PC-3 (cell line): ENCODE measurements at regions of chr7 and their contacts with region 1.

Region 1: DNA sequence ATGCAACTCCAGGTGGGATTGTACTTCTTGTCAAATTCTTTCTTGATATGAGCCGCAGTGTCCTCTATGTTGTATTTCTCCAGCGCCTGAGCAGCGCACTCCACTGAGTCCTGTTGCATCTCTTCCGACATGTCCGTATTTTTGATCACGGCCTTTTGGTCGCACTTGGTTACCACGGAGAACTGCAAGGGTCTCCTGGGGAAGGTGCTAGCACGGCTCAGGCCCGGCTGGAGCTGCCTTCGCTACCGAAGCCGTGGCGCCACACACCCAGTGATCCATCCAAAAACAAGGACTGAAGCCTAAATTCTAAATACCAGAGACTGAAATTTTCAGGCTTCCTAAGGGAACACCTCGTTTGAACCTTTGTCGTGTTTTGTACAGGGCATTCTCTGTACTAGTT is 194.4 kb upstream of the SEMA3D start:
- DNase-seq: no peak
- ATAC-seq: no peak
- H3K4me3 ChIP-seq: no peak overlapping the region
- H3K27ac ChIP-seq: no peak overlapping the region
- H3K4me1 ChIP-seq: peaks cover 22% of the 10 kb centered on the region
- H3K27me3 ChIP-seq: no peaks in the 10 kb centered on the region
- CTCF ChIP-seq: no peak

Region 2: DNA sequence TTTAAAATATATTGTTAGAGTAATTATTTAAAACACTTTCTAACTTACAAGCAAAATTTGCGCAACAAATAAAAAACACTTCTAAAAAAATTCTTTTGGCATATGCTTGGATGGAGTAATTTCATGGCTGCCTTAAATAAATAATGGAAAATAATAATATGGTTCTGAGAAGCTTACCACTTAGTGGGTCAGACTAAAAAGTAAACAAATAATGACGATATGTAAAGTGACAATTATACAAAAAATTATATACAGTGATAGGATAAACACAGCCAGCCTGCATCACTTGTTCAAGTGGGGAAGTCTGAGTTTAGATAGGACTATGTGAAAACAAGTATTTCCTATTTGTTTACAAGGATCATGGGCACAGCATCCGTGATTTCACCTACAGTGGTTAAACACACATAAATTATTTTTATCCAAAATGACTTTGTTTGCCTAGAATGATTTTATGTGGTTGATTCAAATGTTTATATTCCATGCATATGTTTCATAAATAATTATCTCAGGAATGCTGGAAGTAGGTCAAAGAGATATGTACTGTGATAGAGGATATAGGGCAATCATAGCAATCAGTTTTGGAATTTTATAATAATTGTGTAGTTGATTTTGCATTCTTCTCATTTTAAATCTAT is 52.6 kb before region 1 on chr7:
- CTCF ChIA-PET with region 1: no interaction called
- POLR2A ChIA-PET with region 1: no interaction called
- intact Hi-C with region 1: loop called (anchors 5 kb)
- DNase-seq: peak; percentile 49
- ATAC-seq: peak; percentile 53
- H3K4me3 ChIP-seq: no peak overlapping the region
- H3K27ac ChIP-seq: no peak overlapping the region
- H3K4me1 ChIP-seq: peaks cover 20% of the 10 kb centered on the region
- H3K27me3 ChIP-seq: no peaks in the 10 kb centered on the region
- CTCF ChIP-seq: no peak

Region 3: GRCh38 chr7:85535974-85536729 is 154.9 kb after region 1 on chr7:
- CTCF ChIA-PET with region 1: no interaction called
- POLR2A ChIA-PET with region 1: no interaction called
- intact Hi-C with region 1: no loop called
- DNase-seq: no peak
- ATAC-seq: no peak
- H3K4me3 ChIP-seq: no peak overlapping the region
- H3K27ac ChIP-seq: no peak overlapping the region
- H3K4me1 ChIP-seq: no peaks in the 10 kb centered on the region
- H3K27me3 ChIP-seq: no peaks in the 10 kb centered on the region
- CTCF ChIP-seq: no peak

Region 4: DNA sequence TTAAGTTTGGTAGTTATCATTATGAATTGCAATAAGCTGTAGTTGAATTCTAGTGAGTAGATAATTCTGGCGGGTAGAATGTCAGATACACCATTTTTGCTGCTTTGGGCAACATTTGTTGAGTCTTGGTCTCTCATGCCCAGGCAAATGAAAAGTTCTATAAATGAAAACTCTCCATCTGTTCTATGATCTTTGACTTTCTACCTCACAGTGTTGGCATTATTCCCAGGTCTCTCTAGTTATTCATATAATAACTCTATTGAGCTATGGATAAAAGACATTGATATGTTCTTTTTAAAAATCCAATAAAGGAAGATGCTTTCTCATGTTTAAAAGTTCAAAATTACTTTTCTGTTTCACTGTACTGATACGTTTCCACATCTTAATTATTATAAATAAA is 221.0 kb after region 1 on chr7:
- CTCF ChIA-PET with region 1: no interaction called
- POLR2A ChIA-PET with region 1: no interaction called
- intact Hi-C with region 1: no loop called
- DNase-seq: no peak
- ATAC-seq: no peak
- H3K4me3 ChIP-seq: no peak overlapping the region
- H3K27ac ChIP-seq: no peak overlapping the region
- H3K4me1 ChIP-seq: no peaks in the 10 kb centered on the region
- H3K27me3 ChIP-seq: no peaks in the 10 kb centered on the region
- CTCF ChIP-seq: no peak